ENCODE measurements at regions of chr9 and their contacts with region 1.

Region 1: DNA sequence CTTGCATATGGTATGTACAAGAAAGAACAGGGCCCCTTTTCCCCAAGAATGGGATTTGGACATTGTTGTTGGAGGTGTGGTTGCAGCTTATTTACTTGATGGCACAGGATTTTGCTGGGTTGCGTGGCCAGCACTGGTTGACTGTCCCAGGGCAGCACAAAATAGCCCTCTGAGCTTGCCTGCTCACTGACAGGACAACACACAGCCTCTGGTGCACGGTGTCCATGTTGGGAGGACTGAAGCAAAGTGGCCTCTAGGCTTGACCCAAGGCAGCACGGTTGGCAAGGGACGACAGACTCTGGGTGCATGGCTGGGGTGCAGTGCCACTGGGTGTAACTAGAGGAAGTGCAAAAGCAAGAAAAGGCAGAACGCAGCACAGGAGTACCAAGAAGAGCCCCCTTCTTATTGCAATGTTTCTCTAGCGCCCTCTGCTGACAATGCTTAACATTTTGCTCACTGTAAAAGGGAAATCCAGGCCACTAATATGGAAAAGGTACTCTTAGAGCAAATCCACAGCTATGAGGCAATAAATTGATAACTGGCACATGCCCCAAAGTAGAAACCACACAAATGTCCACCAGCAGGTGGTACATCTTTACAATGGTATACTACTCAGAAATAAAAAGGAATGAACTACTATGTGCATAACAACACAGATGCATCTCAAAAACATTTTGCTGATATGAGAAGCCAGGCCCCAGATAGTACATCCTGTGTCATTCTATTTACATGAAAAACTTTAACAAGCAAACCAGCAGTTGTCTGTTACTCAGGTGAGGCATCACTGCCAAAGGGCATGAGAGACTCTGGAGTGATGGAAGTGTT is 47.4 kb upstream of the BARX1 start:
- DNase-seq: peak in 3 of 9 donors; percentile 12 to 16 (median 14)
- ATAC-seq: no peak
- H3K4me3 ChIP-seq: no peak overlapping the region
- H3K4me3 Mint-ChIP-seq: no peak overlapping the region
- H3K27ac ChIP-seq: no peak overlapping the region
- H3K27ac Mint-ChIP-seq: no peak overlapping the region
- H3K4me1 ChIP-seq: no peaks in the 10 kb centered on the region
- H3K4me1 Mint-ChIP-seq: peaks cover 0 to 2% (median 0%) of the 10 kb centered on the region in 7 donors
- H3K27me3 ChIP-seq: no peaks in the 10 kb centered on the region
- H3K27me3 Mint-ChIP-seq: peaks cover 0 to 15% (median 5%) of the 10 kb centered on the region in 5 donors

Region 2: GRCh38 chr9:93682232-93682968 is 320.1 kb before region 1 on chr9:
- CTCF ChIA-PET with region 1: no interaction called
- POLR2A ChIA-PET with region 1: no interaction called
- intact Hi-C with region 1: loop called in 1 of 2 experiments (anchors 1 kb)
- DNase-seq: peak; percentile 23 to 64 (median 49)
- ATAC-seq: peak; percentile 62
- H3K4me3 ChIP-seq: no peak overlapping the region
- H3K4me3 Mint-ChIP-seq: no peak overlapping the region
- H3K27ac ChIP-seq: no peak overlapping the region
- H3K27ac Mint-ChIP-seq: no peak overlapping the region
- H3K4me1 ChIP-seq: no peaks in the 10 kb centered on the region
- H3K4me1 Mint-ChIP-seq: peaks cover 0 to 3% (median 0%) of the 10 kb centered on the region in 7 donors
- H3K27me3 ChIP-seq: no peaks in the 10 kb centered on the region
- H3K27me3 Mint-ChIP-seq: peaks cover 0 to 26% (median 11%) of the 10 kb centered on the region in 5 donors

Measured in naive thymus-derived CD4-positive, alpha-beta T cell (primary cell).